ENCODE measurements at regions of chr17 and their contacts with region 1.

Region 1: GRCh38 chr17:35969558-35970380 is 11.5 kb downstream of the CCL16 start:
- DNase-seq: peak; percentile 88
- ATAC-seq: peak; percentile 83

Region 2: GRCh38 chr17:36152636-36153120 is 182.9 kb after region 1 on chr17:
- intact Hi-C with region 1: loop called (anchors 10 kb)
- DNase-seq: no peak
- ATAC-seq: no peak

Region 3: GRCh38 chr17:36486204-36487194 is 516.7 kb after region 1 on chr17 and contains the start of gene ZNHIT3:
- intact Hi-C with region 1: loop called (anchors 10 kb)
- DNase-seq: peak; percentile 94
- ATAC-seq: peak; percentile 97
- total RNA-seq, gene ZNHIT3: 28.6 TPM

Measured in sciatic nerve (tissue), 2 donors.